ENCODE measurements at regions of chr9 and their contacts with region 1.

Region 1: GRCh38 chr9:101311758-101312420 is 72.9 kb downstream of the BAAT start:
- DNase-seq: peak in 1 of 6 donors; percentile 18
- ATAC-seq: peak; percentile 80 to 93 (median 87)
- H3K4me3 ChIP-seq: no peak overlapping the region
- H3K27ac ChIP-seq: no peak overlapping the region
- H3K4me1 ChIP-seq: peaks cover 0 to 6% (median 0%) of the 10 kb centered on the region in 3 donors
- H3K27me3 ChIP-seq: no peaks in the 10 kb centered on the region
- CTCF ChIP-seq: peak; percentile 65 to 72 (median 69)

Region 2: DNA sequence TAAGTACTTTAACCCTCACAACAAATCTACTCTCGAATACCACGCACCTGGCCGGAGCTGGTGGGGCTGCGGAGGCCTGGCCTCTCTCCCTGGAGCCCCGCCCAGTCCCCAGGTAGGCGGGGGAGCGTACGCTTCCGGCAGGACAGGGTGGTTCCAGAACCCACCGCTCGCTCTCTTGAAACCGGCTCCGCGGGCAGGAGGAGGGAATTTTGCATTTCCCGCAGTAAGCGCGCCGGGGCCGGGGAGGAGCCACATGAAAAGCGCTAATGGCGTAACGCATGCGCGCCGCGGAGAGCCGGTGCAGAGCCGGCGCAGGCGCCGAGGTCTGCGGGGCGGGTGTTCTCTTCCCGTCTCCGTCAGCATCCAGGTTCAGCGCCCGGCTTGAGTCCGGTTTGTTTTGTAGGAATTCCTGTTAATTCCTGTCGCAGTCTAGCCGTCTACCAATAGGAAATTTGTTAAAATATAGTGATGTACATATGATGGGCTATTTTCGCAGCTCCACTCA is 713.2 kb before region 1 on chr9:
- intact Hi-C with region 1: loop called in 1 of 3 experiments (anchors 10 kb)
- DNase-seq: peak; percentile 84 to 95 (median 88)
- ATAC-seq: peak; percentile 87 to 93 (median 91)
- H3K4me3 ChIP-seq: peak overlapping the region; percentile 7 to 49 (median 28)
- H3K27ac ChIP-seq: peak overlapping the region in 3 of 4 donors; percentile 47 to 54 (median 50)
- H3K4me1 ChIP-seq: no peaks in the 10 kb centered on the region
- H3K27me3 ChIP-seq: no peaks in the 10 kb centered on the region
- CTCF ChIP-seq: no peak

Region 3: GRCh38 chr9:100714372-100715099 is 597.4 kb before region 1 on chr9:
- intact Hi-C with region 1: loop called in 1 of 3 experiments (anchors 10 kb)
- DNase-seq: peak; percentile 37 to 77 (median 60)
- ATAC-seq: peak; percentile 60 to 94 (median 89)
- H3K4me3 ChIP-seq: no peak overlapping the region
- H3K27ac ChIP-seq: no peak overlapping the region
- H3K4me1 ChIP-seq: no peaks in the 10 kb centered on the region
- H3K27me3 ChIP-seq: no peaks in the 10 kb centered on the region
- CTCF ChIP-seq: peak; percentile 71 to 95 (median 88)

Region 4: DNA sequence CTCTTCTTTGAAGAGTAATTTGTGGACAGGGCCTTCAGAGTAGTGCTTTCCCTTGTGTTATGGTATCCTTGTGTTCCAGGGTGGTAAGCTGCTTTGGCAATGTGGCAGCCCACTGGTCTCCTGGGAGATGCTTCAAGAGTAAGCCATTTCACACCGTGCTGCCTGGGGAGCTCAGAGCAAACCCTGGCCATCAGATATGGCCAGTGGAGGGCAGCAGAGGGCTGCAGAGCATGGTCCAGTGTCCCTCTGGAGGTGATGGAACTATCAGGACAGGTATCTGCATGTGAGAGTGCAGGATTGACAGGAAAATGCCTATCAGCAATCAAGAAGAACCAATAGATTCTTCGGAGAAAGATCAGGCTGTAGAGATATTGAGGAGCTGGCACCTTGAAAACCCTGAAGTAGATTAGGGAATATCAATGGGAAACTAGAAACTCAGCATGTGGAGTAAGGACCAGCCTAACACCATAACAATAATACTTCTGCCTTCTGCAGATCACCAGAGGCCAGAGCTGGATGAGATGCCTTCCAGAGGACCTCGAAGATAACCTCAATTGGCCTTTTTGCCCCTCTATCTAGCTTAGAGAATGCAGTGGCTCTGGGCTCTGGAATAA is 192.6 kb before region 1 on chr9:
- intact Hi-C with region 1: loop called in 2 of 3 experiments (anchors 5 to 10 kb)
- DNase-seq: peak; percentile 26 to 84 (median 68)
- ATAC-seq: peak; percentile 84 to 100 (median 98)
- H3K4me3 ChIP-seq: no peak overlapping the region
- H3K27ac ChIP-seq: no peak overlapping the region
- H3K4me1 ChIP-seq: no peaks in the 10 kb centered on the region
- H3K27me3 ChIP-seq: no peaks in the 10 kb centered on the region
- CTCF ChIP-seq: peak; percentile 44 to 79 (median 66)

Region 5: GRCh38 chr9:101126556-101126955 is 185.3 kb before region 1 on chr9:
- intact Hi-C with region 1: loop called in 2 of 3 experiments (anchors 5 to 10 kb)
- DNase-seq: no peak
- ATAC-seq: no peak
- H3K4me3 ChIP-seq: no peak overlapping the region
- H3K27ac ChIP-seq: no peak overlapping the region
- H3K4me1 ChIP-seq: no peaks in the 10 kb centered on the region
- H3K27me3 ChIP-seq: no peaks in the 10 kb centered on the region
- CTCF ChIP-seq: no peak

Region 6: GRCh38 chr9:101139082-101139481 is 172.8 kb before region 1 on chr9:
- intact Hi-C with region 1: no loop called
- DNase-seq: no peak
- ATAC-seq: no peak
- H3K4me3 ChIP-seq: no peak overlapping the region
- H3K27ac ChIP-seq: no peak overlapping the region
- H3K4me1 ChIP-seq: no peaks in the 10 kb centered on the region
- H3K27me3 ChIP-seq: no peaks in the 10 kb centered on the region
- CTCF ChIP-seq: no peak

Region 7: GRCh38 chr9:101235105-101235866 is 76.6 kb before region 1 on chr9:
- intact Hi-C with region 1: no loop called
- DNase-seq: no peak
- ATAC-seq: peak in 3 of 4 donors; percentile 77 to 81 (median 78)
- H3K4me3 ChIP-seq: no peak overlapping the region
- H3K27ac ChIP-seq: no peak overlapping the region
- H3K4me1 ChIP-seq: no peaks in the 10 kb centered on the region
- H3K27me3 ChIP-seq: no peaks in the 10 kb centered on the region
- CTCF ChIP-seq: peak in 3 of 4 donors; percentile 13 to 29 (median 24)

Region 8: GRCh38 chr9:101387871-101388506 is 76.1 kb after region 1 on chr9:
- intact Hi-C with region 1: loop called in 1 of 3 experiments (anchors 10 kb)
- DNase-seq: peak in 2 of 6 donors; percentile 23 to 27
- ATAC-seq: peak; percentile 89 to 98 (median 96)
- H3K4me3 ChIP-seq: no peak overlapping the region
- H3K27ac ChIP-seq: peak overlapping the region in 1 of 4 donors; percentile 55
- H3K4me1 ChIP-seq: peaks cover 0 to 7% (median 5%) of the 10 kb centered on the region in 3 donors
- H3K27me3 ChIP-seq: no peaks in the 10 kb centered on the region
- CTCF ChIP-seq: peak; percentile 10 to 49 (median 41)

Region 9: GRCh38 chr9:101398068-101398929 is 86.4 kb after region 1 on chr9 and contains the starts of genes MRPL50 and ZNF189:
- intact Hi-C with region 1: no loop called
- DNase-seq: peak; percentile 92 to 99 (median 98)
- ATAC-seq: peak; percentile 94 to 98 (median 96)
- H3K4me3 ChIP-seq: peak within 1 kb of the TSS; percentile 58 to 79 (median 70)
- H3K27ac ChIP-seq: peak within 1 kb of the TSS; percentile 72 to 90 (median 84)
- H3K4me1 ChIP-seq: peaks cover 15 to 27% (median 25%) of the 10 kb centered on the region in 3 donors
- H3K27me3 ChIP-seq: no peaks in the 10 kb centered on the region
- CTCF ChIP-seq: no peak
- total RNA-seq, gene MRPL50: 3.7 to 6.9 (median 6.4) TPM
- total RNA-seq, gene ZNF189: 11.3 to 29.1 (median 19.7) TPM